WTC11 (cell line): ENCODE measurements at regions of chr1 and their contacts with region 1.

Region 1: DNA sequence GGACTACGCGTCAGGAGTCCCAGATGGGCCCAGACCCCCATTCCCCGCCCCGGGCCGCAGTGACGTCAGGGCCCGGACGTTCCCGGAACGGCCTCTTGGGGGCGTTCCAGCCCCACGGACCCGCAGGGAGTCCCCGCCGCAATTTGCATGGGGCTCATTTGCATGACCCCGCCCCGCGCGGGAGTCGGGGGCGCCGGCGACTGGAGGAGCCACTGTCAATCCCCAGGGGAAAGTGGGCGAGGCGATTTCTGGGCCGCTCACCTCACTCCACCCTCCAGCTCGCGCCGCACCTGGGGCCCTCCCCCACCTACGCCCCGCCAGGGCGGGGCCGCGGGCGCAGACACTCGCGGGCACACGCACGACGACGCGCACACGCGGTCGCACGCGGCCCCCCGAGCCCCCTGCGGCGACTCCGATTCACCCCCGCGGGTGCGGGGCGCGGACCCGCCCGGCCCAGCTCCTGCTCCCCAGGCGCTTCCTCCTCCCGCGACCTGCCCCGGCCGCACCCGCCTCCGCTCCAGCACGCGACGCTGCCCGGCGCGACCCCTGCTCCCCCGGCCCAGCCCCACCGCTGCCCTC is 13.2 kb downstream of the AGRN start:
- DNase-seq: peak; percentile 98
- ATAC-seq: peak; percentile 90
- H3K4me3 Mint-ChIP-seq: 0 out of 2 replicates have a peak overlapping the region, but pooled peaks have one; percentile 22
- H3K27ac Mint-ChIP-seq: no peak overlapping the region
- H3K4me1 Mint-ChIP-seq: peaks cover 10% of the 10 kb centered on the region
- H3K27me3 Mint-ChIP-seq: peaks cover 31% of the 10 kb centered on the region
- CTCF ChIP-seq: peak; percentile 76

Region 2: DNA sequence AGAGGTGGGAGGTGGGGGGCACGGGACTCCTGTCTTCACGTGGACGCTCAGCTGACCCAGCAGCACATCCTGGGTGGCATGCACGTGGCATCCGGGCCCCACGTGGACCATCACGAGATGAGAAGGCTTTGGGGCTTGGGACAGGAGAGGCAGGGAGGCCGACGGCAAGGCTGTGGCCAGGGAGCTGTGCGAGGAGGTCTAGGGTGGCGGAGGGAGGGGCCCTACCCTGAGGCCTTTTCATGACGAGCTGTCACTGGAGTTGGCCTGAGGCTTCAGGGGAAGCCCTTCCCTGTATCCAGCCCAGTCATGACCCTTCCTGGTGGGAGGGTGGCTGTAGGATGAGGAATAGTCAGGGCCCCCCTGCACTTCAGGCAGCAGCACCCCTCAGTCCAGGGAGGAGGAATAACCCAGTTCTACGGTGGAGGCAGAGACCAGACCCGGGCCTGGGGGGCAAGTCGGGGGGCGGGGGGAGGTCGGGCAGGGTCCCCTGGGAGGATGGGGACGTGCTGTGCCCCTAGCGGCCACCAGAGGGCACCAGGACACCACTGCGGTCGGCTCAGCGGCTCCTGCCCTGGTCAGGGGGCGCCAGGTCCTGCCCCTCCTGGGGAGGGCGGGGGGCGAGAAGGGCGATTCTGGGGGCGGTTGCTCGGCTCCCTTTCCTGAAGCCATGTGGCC is 49.2 kb before region 1 on chr1:
- CTCF ChIA-PET with region 1: interaction called, 20 read pairs
- POLR2A ChIA-PET with region 1: no interaction called
- DNase-seq: peak; percentile 85
- ATAC-seq: peak; percentile 92
- H3K4me3 Mint-ChIP-seq: no peak overlapping the region
- H3K27ac Mint-ChIP-seq: no peak overlapping the region
- H3K4me1 Mint-ChIP-seq: no peaks in the 10 kb centered on the region
- H3K27me3 Mint-ChIP-seq: peaks cover 59% of the 10 kb centered on the region
- CTCF ChIP-seq: peak; percentile 98

Region 3: GRCh38 chr1:1013105-1013921 is 19.8 kb before region 1 on chr1 and contains the start of gene ISG15:
- CTCF ChIA-PET with region 1: interaction called, 47 read pairs
- POLR2A ChIA-PET with region 1: no interaction called
- DNase-seq: peak; percentile 88
- ATAC-seq: peak; percentile 78
- H3K4me3 Mint-ChIP-seq: peak within 1 kb of the TSS; percentile 78
- H3K27ac Mint-ChIP-seq: peak within 1 kb of the TSS; percentile 95
- H3K4me1 Mint-ChIP-seq: peaks cover 29% of the 10 kb centered on the region
- H3K27me3 Mint-ChIP-seq: peaks cover 48% of the 10 kb centered on the region
- CTCF ChIP-seq: no peak
- total RNA-seq, gene ISG15: 29.5 to 38.3 TPM (median 36.1 TPM) in 3 replicates

Region 4: DNA sequence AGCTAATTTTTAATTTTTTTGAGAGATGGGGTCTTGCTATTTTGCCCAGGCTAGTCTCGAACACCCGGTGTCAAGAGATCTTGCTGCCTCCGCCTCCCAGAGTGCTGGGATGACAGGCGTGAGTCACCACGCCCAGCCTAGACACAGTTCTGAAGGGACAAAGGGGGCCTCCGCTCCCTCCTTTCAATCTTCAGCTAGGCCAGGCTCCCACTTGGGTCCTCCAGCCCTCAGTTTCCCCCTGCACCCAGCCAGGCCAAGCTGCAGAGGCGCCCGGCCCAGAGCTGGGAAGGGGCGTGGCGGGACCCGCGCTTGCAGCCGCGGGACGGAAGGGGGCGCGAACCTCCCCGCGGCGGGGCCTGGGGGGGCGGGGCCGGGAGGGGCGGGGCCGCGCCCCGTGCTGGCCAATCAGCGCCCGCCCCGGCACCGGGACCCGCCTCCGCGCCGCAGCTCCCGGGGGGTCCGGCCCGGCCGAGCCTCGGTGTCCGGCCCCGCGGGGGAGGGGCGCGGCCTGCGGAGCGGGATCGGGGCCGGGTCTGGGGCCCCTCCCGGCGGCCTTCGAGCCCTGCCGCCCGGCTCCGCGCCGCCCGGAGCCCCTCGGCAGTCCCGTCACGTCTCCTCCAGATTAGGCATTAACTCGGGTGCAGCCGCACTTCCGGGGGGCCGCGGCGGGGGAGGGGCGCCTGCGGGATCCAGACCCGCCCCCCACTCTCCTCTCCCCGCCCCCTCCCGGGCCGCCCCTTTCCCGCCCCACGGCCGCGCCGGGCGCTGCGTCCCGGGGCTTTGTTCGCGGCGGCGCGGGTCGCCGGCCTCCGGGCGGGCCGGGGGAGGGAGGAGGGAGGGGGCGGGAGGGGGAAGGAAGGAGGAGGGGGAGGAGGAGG is 13.7 kb before region 1 on chr1:
- CTCF ChIA-PET with region 1: interaction called, 47 read pairs
- POLR2A ChIA-PET with region 1: interaction called, 9 read pairs
- DNase-seq: peak; percentile 78
- ATAC-seq: peak; percentile 79
- H3K4me3 Mint-ChIP-seq: peak overlapping the region; percentile 34
- H3K27ac Mint-ChIP-seq: no peak overlapping the region
- H3K4me1 Mint-ChIP-seq: peaks cover 37% of the 10 kb centered on the region
- H3K27me3 Mint-ChIP-seq: peaks cover 17% of the 10 kb centered on the region
- CTCF ChIP-seq: no peak